IMR-90 (cell line): ENCODE measurements at regions of chr4 and their contacts with region 1.

Region 1: GRCh38 chr4:10655986-10656385 is 28.6 kb downstream of the CLNK start:
- DNase-seq: peak; percentile 88
- ATAC-seq: peak; percentile 72
- H3K4me3 ChIP-seq: no peak overlapping the region
- H3K27ac ChIP-seq: peak overlapping the region; percentile 64
- H3K4me1 ChIP-seq: peaks cover 3% of the 10 kb centered on the region
- H3K27me3 ChIP-seq: no peaks in the 10 kb centered on the region
- CTCF ChIP-seq: no peak
- POLR2A ChIP-seq: no peak
- RAD21 ChIP-seq: no peak

Region 2: DNA sequence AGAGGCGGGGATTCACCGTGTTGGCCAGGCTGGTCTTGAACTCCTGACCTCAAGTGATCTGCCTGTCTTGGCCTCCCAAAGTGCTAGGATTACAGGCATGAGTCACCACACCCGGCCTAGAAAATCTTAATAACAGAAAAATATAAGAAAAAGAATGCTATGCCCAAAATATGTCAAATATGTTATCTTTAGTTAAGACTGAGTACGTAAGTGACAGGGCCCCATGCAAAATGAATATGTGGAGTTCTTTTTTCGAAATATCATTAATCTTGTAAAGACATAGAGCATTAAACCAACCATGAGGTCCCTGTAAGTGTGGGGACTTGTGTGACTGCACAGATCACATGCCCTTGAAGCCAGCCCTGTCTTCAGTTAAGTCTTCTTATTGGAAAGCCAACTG is 189.8 kb before region 1 on chr4:
- CTCF ChIA-PET with region 1: no interaction called
- POLR2A ChIA-PET with region 1: no interaction called
- dilution Hi-C with region 1: no loop called
- in situ Hi-C with region 1: no loop called
- intact Hi-C with region 1: no loop called
- DNase-seq: no peak
- ATAC-seq: no peak
- H3K4me3 ChIP-seq: no peak overlapping the region
- H3K27ac ChIP-seq: no peak overlapping the region
- H3K4me1 ChIP-seq: no peaks in the 10 kb centered on the region
- H3K27me3 ChIP-seq: peaks cover 13% of the 10 kb centered on the region
- CTCF ChIP-seq: no peak
- POLR2A ChIP-seq: no peak
- RAD21 ChIP-seq: no peak

Region 3: DNA sequence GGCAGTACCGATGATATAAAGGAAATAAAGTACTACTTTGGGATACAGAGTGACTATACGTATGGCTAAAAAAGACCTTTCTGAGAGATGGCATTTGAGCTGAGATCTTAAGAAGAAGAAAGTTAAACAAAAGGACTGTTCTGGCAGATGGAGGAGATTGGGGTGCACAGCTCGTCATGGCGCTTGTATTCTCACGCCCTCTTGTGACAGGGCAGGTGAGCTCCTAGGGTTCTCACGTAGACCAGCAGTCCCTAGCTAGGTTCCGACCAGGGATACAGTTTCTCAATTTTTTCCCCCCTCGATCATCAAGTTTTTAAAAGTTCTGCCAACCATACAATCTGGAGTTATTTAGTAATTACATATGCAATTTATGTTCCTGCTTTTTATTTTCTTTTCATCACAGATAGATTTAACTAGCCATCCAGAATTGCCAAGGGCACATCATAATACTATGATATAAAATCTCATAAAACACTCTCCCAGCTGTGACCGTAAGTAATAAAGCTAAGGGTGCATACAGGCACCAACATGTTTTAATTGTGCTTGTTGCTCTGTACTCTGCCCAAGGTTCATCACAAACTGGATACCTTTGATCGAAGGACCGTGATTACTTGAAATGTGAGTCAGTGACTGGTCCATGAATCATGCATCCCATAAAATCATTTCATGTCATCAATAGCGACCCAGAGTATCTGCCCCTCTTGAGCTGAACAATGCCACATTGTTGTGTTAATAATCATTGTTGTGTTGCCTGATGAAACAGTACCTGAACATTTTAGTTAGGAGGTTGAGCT is 129.4 kb before region 1 on chr4:
- CTCF ChIA-PET with region 1: no interaction called
- POLR2A ChIA-PET with region 1: no interaction called
- dilution Hi-C with region 1: no loop called
- in situ Hi-C with region 1: no loop called
- intact Hi-C with region 1: no loop called
- DNase-seq: no peak
- ATAC-seq: no peak
- H3K4me3 ChIP-seq: no peak overlapping the region
- H3K27ac ChIP-seq: no peak overlapping the region
- H3K4me1 ChIP-seq: no peaks in the 10 kb centered on the region
- H3K27me3 ChIP-seq: no peaks in the 10 kb centered on the region
- CTCF ChIP-seq: no peak
- POLR2A ChIP-seq: no peak
- RAD21 ChIP-seq: no peak

Region 4: DNA sequence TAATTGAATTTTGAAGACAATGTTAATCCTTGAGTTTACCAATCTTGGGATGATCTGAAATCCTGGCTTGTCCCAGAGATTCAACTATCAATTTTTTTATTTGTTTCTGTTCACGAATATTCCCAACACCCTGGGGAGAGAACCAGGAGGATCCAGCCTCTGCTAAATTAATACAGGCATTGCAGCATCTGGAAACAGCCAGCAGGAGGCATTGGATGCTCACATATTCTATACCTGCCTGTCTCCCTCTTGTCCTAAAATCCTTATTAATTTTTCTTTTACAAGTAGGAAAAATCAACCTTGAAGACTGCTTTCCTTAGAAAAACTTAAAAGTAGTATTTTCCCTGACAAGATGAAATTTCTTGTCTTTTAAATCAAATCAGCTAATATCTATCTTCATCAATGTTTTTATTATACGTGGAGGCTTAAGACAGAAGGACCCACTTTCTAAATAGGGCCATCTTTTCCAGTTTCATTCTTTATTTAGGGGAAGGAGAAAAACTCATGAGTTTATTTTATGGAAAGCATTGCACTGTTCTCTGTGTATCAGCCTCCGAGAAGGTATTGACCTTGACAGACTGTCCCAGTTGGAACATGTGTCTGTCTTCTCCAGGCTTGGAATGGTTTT is 73.8 kb before region 1 on chr4:
- CTCF ChIA-PET with region 1: no interaction called
- POLR2A ChIA-PET with region 1: no interaction called
- dilution Hi-C with region 1: no loop called
- in situ Hi-C with region 1: no loop called
- intact Hi-C with region 1: no loop called
- DNase-seq: peak; percentile 69
- ATAC-seq: peak; percentile 82
- H3K4me3 ChIP-seq: no peak overlapping the region
- H3K27ac ChIP-seq: no peak overlapping the region
- H3K4me1 ChIP-seq: no peaks in the 10 kb centered on the region
- H3K27me3 ChIP-seq: peaks cover 4% of the 10 kb centered on the region
- CTCF ChIP-seq: peak; percentile 99
- POLR2A ChIP-seq: 0 out of 2 replicates have a peak, but pooled peaks have one; percentile 35
- RAD21 ChIP-seq: peak; percentile 99

Region 5: GRCh38 chr4:10643600-10644425 is 12.2 kb before region 1 on chr4:
- CTCF ChIA-PET with region 1: no interaction called
- POLR2A ChIA-PET with region 1: interaction called, 12 read pairs
- dilution Hi-C with region 1: no loop called
- in situ Hi-C with region 1: no loop called
- intact Hi-C with region 1: no loop called
- DNase-seq: peak; percentile 20
- ATAC-seq: peak; percentile 29; the same call in 1 of the 2 replicates
- H3K4me3 ChIP-seq: no peak overlapping the region
- H3K27ac ChIP-seq: no peak overlapping the region
- H3K4me1 ChIP-seq: 0 out of 2 replicates have a peak, but pooled peaks cover 3% of the 10 kb centered on the region
- H3K27me3 ChIP-seq: no peaks in the 10 kb centered on the region
- CTCF ChIP-seq: no peak
- POLR2A ChIP-seq: no peak
- RAD21 ChIP-seq: no peak